Breast epithelium (tissue), 4 donors: ENCODE measurements at regions of chr18 and their contacts with region 1.

Region 1: GRCh38 chr18:22348521-22349316 is 69.0 kb downstream of the CTAGE1 start:
- DNase-seq: peak; percentile 67 to 71
- H3K4me3 ChIP-seq: peak overlapping the region; percentile 36 to 73 (median 58)
- H3K27ac ChIP-seq: peak overlapping the region; percentile 70 to 84
- H3K4me1 ChIP-seq: no peaks in the 10 kb centered on the region
- H3K27me3 ChIP-seq: no peaks in the 10 kb centered on the region
- CTCF ChIP-seq: no peak
- POLR2A ChIP-seq: no peak

Region 2: GRCh38 chr18:23207191-23207955 is 858.7 kb after region 1 on chr18:
- intact Hi-C with region 1: loop called (anchors 5 kb)
- DNase-seq: no peak
- H3K4me3 ChIP-seq: no peak overlapping the region
- H3K27ac ChIP-seq: no peak overlapping the region
- H3K4me1 ChIP-seq: no peaks in the 10 kb centered on the region
- H3K27me3 ChIP-seq: no peaks in the 10 kb centered on the region
- CTCF ChIP-seq: no peak
- POLR2A ChIP-seq: no peak